PC-9 (cell line): ENCODE measurements at regions of chr11 and their contacts with region 1.

Region 1: DNA sequence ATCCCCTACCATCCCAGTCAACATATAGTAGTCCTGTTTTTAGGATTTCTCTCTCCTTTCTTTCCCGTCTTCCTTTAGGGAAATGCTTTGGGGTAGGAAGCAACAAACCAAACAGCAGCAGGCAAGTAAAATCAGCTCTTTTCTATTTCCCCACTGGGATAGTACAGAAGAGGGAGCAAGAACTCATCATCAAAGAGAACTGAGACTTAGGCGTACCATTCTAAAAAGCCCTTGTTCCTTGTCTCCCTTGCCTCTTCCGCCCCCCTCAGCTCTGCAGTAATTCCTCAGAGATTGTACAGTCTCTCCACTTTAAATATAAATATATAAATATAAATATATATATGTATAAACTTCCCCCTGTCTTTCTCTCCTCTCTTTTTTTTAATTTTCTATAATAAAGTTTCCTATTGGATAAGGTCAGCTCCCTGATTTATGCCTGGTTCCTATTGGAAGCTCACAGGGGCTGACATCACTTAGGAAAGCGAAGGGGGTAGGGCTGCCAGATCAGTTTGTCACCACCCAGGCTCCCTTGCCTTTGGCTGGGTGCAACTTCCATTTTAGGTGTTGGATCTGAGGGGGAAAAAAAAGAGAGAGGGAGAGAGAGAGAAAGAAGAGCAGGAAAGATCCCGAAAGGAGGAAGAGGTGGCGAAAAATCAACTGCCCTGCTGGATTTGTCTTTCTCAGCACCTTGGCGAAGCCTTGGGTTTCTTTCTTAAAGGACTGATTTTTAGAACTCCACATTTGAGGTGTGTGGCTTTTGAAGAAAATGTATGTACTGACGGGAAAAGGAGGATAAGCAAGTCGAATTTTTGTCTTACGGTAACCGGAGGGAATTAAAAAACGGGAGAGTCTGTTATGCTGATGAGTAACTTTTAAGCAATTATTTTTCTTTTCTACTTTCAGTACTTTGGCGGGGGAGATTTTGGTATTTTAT is at the start of gene CTNND1:
- DNase-seq: peak; percentile 92 to 96
- H3K4me3 ChIP-seq: peak within 1 kb of the TSS; percentile 100
- H3K27ac ChIP-seq: peak within 1 kb of the TSS; percentile 98
- H3K4me1 ChIP-seq: peaks cover 30% of the 10 kb centered on the region
- H3K27me3 ChIP-seq: no peaks in the 10 kb centered on the region
- CTCF ChIP-seq: no peak
- total RNA-seq, gene CTNND1: 340 and 413 TPM in 2 replicates

Region 2: GRCh38 chr11:57712256-57713150 is 49.1 kb before region 1 on chr11 and contains the start of gene TMX2:
- CTCF ChIA-PET with region 1: interaction called, 3 read pairs
- POLR2A ChIA-PET with region 1: interaction called, 4 read pairs
- intact Hi-C with region 1: loop called (anchors 1 kb)
- DNase-seq: peak; percentile 94 to 100
- H3K4me3 ChIP-seq: peak within 1 kb of the TSS; percentile 97
- H3K27ac ChIP-seq: peak within 1 kb of the TSS; percentile 75
- H3K4me1 ChIP-seq: peaks cover 25% of the 10 kb centered on the region
- H3K27me3 ChIP-seq: no peaks in the 10 kb centered on the region
- CTCF ChIP-seq: no peak
- total RNA-seq, gene TMX2: 124 and 138 TPM in 2 replicates

Region 3: DNA sequence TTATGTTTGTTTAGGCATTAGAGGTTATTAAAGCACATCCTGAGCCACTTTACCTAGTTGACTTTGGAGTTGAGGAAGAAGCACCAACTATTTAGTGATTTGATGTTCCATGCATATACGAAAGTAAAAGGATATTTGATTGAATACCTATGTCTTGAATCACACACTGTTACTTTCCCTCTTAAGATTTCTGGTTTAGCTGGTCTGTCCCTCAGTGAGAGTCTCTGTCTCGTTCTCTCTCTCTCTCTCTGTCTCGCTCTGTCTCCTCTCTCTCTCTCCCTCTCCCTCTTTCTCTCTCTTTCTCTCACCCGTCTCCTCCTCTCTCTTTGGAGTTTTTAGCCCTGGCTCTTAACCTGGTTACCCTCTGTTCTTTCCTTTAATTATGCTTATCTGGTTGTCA is 11.0 kb after region 1 on chr11:
- CTCF ChIA-PET with region 1: interaction called, 38 read pairs
- POLR2A ChIA-PET with region 1: interaction called, 22 read pairs
- intact Hi-C with region 1: loop called (anchors 1 kb)
- DNase-seq: peak in 1 of 2 experiments; percentile 92
- H3K4me3 ChIP-seq: peak overlapping the region; percentile 40; the same call in 1 of the 2 replicates
- H3K27ac ChIP-seq: peak overlapping the region; percentile 86
- H3K4me1 ChIP-seq: peaks cover 89% of the 10 kb centered on the region
- H3K27me3 ChIP-seq: no peaks in the 10 kb centered on the region
- CTCF ChIP-seq: no peak

Region 4: GRCh38 chr11:57778318-57779037 is 16.9 kb after region 1 on chr11:
- CTCF ChIA-PET with region 1: interaction called, 38 read pairs
- POLR2A ChIA-PET with region 1: interaction called, 38 read pairs
- intact Hi-C with region 1: loop called (anchors 1 kb)
- DNase-seq: peak; percentile 98 to 99
- H3K4me3 ChIP-seq: peak overlapping the region; percentile 50; the same call in 1 of the 2 replicates
- H3K27ac ChIP-seq: peak overlapping the region; percentile 93
- H3K4me1 ChIP-seq: peaks cover 93% of the 10 kb centered on the region
- H3K27me3 ChIP-seq: no peaks in the 10 kb centered on the region
- CTCF ChIP-seq: no peak